ENCODE measurements at regions of chr22 and their contacts with region 1.

Region 1: DNA sequence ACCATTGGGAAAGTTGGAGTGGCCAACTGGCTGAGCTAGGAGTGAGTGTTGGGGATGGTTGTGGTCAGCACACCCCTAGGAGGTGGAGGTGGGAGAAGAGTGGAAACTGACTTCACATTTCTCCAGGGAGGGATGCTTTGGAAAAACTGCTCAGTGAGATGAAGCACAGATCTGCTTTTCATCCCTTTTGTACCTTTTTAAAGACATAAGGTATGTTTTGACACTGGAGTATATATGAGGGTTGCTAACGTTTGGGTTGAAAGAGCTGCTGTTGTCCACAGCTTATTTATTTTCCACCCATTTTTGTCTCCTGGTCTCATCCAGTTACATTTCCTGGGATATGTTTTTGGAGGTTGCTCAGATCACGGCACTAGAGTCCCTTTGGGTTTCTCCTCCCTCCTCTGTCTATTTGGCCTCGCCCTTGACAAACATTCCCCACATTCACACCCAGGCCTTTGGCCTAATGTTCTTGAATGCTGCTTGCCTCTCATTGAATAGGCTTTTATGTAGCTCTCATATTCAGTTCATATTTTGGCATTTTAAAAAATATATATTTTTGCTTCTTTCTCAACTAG is 8.3 kb downstream of the SREBF2 start:
- DNase-seq: peak in 1 of 2 experiments; percentile 84
- H3K4me3 ChIP-seq: peak overlapping the region; percentile 25
- H3K27ac ChIP-seq: peak overlapping the region; percentile 80
- H3K4me1 ChIP-seq: peaks cover 84% of the 10 kb centered on the region
- H3K27me3 ChIP-seq: no peaks in the 10 kb centered on the region
- CTCF ChIP-seq: no peak

Region 2: GRCh38 chr22:41762980-41763779 is 78.0 kb before region 1 on chr22:
- CTCF ChIA-PET with region 1: no interaction called
- POLR2A ChIA-PET with region 1: interaction called, 12 read pairs
- intact Hi-C with region 1: no loop called
- DNase-seq: peak in 1 of 2 experiments; percentile 14
- H3K4me3 ChIP-seq: no peak overlapping the region
- H3K27ac ChIP-seq: no peak overlapping the region
- H3K4me1 ChIP-seq: 0 out of 2 replicates have a peak, but pooled peaks cover 8% of the 10 kb centered on the region
- H3K27me3 ChIP-seq: no peaks in the 10 kb centered on the region
- CTCF ChIP-seq: peak; percentile 68

Region 3: DNA sequence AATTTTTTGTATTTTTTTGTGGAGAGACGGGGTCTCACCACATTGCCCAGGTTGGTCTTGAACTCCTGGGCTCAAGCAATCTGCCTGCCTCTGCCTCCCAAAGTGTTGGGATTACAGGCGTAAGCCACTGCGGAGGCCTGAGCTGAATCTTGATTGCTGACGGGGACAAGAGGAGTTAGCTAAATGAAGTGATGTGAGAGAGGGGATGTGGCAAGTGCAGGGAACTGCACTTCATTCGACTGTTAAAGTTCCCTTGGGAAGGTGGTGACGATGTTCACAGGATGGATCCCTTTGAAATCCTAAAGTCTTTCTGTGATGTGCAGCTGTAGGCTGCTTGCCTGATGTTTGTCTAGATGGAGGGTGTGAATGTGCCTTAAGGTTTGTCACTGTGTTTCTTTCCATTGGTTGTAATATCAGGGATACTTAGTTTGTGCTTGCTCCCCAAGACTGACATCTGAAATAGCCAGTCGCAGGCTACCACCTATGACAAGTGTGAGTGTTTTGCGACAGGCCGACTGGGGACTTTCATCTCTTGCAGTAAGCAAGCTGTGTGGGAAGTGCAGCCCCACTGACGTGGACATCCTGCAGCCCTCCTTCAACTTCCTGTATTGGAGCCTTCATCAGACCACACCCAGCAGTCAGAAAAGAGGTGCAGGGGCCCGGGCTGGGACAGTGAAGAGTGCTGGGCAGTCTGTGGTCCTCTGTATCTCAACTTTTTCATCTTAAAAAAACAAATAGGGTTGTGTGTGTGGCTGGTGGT is 60.2 kb before region 1 on chr22:
- CTCF ChIA-PET with region 1: no interaction called
- POLR2A ChIA-PET with region 1: interaction called, 16 read pairs
- intact Hi-C with region 1: no loop called
- DNase-seq: no peak
- H3K4me3 ChIP-seq: no peak overlapping the region
- H3K27ac ChIP-seq: no peak overlapping the region
- H3K4me1 ChIP-seq: peaks cover 7% of the 10 kb centered on the region
- H3K27me3 ChIP-seq: no peaks in the 10 kb centered on the region
- CTCF ChIP-seq: no peak

Region 4: GRCh38 chr22:41857155-41857859 is 16.1 kb after region 1 on chr22:
- CTCF ChIA-PET with region 1: interaction called, 6 read pairs
- POLR2A ChIA-PET with region 1: no interaction called
- intact Hi-C with region 1: loop called (anchors 1 kb)
- DNase-seq: peak; percentile 67 to 97
- H3K4me3 ChIP-seq: no peak overlapping the region
- H3K27ac ChIP-seq: peak overlapping the region; percentile 76
- H3K4me1 ChIP-seq: peaks cover 51% of the 10 kb centered on the region
- H3K27me3 ChIP-seq: no peaks in the 10 kb centered on the region
- CTCF ChIP-seq: peak; percentile 97